ENCODE measurements at regions of chr7 and their contacts with region 1.

Region 1: DNA sequence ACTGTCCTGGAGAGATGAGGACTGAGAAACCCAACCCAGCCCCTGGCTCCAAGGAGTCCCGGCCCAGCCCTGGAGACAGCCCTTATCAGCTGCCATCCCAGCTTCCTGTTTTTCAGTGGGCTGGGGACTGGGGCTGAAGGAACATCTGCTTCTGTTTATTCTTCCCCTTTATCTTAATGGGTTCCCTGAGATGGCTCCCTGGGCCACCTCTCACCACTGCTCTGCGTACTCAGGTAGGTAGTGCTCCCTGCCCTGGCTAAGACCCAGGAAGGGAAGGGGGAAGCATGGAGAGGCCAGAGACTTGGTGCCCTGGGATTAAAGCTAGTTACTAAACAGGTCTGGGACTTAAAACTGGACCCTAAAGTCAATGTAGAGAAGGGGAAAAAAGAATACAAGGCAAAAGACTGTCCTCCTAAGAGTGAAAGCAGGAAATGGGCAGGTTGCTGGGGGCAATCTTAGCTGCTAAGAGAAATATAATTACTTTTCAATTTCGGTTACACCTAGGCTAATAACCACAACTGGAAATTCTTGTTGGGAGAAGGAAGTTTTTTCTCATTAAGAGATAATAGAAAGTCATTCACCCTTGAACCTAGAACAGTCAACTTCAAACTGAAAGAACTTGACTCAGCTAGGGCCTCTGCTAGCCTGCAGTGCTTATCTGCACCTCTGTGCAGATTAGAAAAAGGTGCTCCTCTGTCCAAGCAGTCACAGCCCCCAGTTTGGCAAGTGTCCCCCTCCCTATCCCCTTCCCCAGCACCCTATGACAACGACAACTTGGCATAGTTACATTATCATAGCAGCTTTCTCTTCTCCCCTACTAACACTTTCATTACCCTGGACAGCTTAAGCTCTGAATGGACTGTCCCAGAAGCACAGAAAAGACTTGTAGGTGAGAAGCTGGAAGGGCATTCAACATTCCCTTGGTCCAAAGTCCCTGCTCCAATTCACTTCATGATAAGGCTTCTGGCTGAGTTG is 65.6 kb upstream of the KDM7A start:
- DNase-seq: no peak
- H3K4me3 ChIP-seq: no peak overlapping the region
- H3K27ac ChIP-seq: no peak overlapping the region
- H3K4me1 ChIP-seq: no peaks in the 10 kb centered on the region
- H3K27me3 ChIP-seq: peaks cover 1% of the 10 kb centered on the region
- CTCF ChIP-seq: no peak

Region 2: GRCh38 chr7:140284062-140284461 is 41.7 kb after region 1 on chr7:
- CTCF ChIA-PET with region 1: no interaction called
- dilution Hi-C with region 1: loop called (anchors 5 kb)
- in situ Hi-C with region 1: no loop called
- intact Hi-C with region 1: no loop called
- DNase-seq: no peak
- H3K4me3 ChIP-seq: no peak overlapping the region
- H3K27ac ChIP-seq: no peak overlapping the region
- H3K4me1 ChIP-seq: no peaks in the 10 kb centered on the region
- H3K27me3 ChIP-seq: peaks cover 2% of the 10 kb centered on the region
- CTCF ChIP-seq: no peak

Region 3: DNA sequence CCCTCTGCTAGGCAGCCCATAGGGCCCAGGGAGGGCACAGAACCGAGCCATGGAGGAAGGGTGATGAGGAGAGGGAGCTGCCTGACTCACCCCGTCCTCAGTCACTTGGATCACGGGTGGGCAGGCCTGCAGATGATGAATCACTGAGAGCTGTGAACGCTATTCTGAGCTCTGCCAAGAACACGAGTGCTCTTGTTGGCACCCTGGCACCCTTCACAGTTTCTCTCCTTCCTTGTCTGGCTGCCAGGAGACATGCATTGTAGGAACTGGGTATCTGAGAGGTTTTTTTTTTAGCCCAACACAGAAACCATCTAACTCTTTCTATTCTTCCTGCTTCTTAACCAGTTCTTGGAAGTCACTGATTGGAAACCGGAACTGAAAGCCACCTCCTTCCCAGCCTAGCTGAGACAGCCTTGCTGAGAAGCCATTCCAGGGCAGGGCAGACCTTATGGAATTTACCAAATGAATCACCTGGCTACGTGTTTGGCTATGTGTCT is 73.9 kb after region 1 on chr7:
- CTCF ChIA-PET with region 1: no interaction called
- dilution Hi-C with region 1: no loop called
- in situ Hi-C with region 1: no loop called
- intact Hi-C with region 1: loop called (anchors 5 kb)
- DNase-seq: peak; percentile 96
- H3K4me3 ChIP-seq: peak overlapping the region; percentile 14 to 39 (median 27)
- H3K27ac ChIP-seq: peak overlapping the region; percentile 95
- H3K4me1 ChIP-seq: peaks cover 25% of the 10 kb centered on the region
- H3K27me3 ChIP-seq: no peaks in the 10 kb centered on the region
- CTCF ChIP-seq: no peak

Measured in mammary epithelial cell (primary cell).